ENCODE measurements at regions of chr20 and their contacts with region 1.

Region 1: GRCh38 chr20:21505161-21505809 is 8.6 kb downstream of the NKX2-2 start:
- DNase-seq: peak in 1 of 2 donors; percentile 52
- H3K4me3 ChIP-seq: peak overlapping the region in 1 of 2 donors; percentile 41
- H3K27ac ChIP-seq: no peak overlapping the region
- H3K4me1 ChIP-seq: peaks cover 0 to 33% (median 25%) of the 10 kb centered on the region in 4 donors
- H3K27me3 ChIP-seq: peaks cover 9 to 91% of the 10 kb centered on the region in 2 donors
- CTCF ChIP-seq: peak; percentile 85 to 89

Region 2: DNA sequence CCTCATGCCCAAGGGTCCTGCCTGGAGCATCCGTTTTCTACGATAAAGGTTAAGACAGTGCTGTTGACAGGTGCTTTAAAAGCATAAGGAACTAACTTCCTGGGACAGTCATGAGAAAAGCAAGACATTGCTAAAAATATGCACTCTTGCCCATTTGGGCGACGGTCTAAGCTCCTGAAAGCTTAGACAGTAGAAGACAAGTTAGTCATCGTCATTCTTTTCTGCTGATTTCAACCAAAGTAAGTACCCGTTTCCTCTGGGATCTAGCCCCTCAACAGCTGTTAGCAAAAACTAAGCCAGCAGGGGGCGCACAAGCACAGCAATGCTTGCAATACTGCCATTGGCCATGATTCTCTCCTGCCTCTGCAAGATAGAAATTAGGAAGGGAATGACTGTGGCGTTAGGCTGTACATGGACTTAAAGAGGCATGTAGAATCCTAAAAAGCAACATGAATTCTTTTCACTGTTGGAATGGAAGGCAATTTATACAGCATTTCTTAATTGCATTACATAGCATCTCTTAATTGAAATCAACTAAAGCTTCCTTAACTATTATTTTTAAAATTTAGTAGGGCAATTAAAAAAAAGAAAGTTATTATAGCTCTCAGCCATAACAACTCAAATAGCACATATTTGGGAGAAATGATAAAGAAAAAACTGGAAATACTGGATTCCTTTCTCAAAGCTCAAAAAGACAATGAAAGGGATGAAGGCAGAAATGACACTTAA is 645.0 kb before region 1 on chr20:
- intact Hi-C with region 1: loop called (anchors 2 kb)
- DNase-seq: peak; percentile 82 to 83
- H3K4me3 ChIP-seq: no peak overlapping the region
- H3K27ac ChIP-seq: no peak overlapping the region
- H3K4me1 ChIP-seq: no peaks in the 10 kb centered on the region
- H3K27me3 ChIP-seq: peaks cover 0 to 7% of the 10 kb centered on the region in 2 donors
- CTCF ChIP-seq: peak; percentile 79 to 81

Region 3: GRCh38 chr20:21235484-21236445 is 269.5 kb before region 1 on chr20:
- intact Hi-C with region 1: loop called (anchors 5 kb)
- DNase-seq: peak in 1 of 2 donors; percentile 33
- H3K4me3 ChIP-seq: no peak overlapping the region
- H3K27ac ChIP-seq: no peak overlapping the region
- H3K4me1 ChIP-seq: peaks cover 0 to 7% (median 0%) of the 10 kb centered on the region in 4 donors
- H3K27me3 ChIP-seq: no peaks in the 10 kb centered on the region
- CTCF ChIP-seq: peak; percentile 64 to 68

Region 4: GRCh38 chr20:21622097-21622857 is 117.0 kb after region 1 on chr20:
- intact Hi-C with region 1: no loop called
- DNase-seq: no peak
- H3K4me3 ChIP-seq: no peak overlapping the region
- H3K27ac ChIP-seq: no peak overlapping the region
- H3K4me1 ChIP-seq: no peaks in the 10 kb centered on the region
- H3K27me3 ChIP-seq: no peaks in the 10 kb centered on the region
- CTCF ChIP-seq: no peak

Region 5: DNA sequence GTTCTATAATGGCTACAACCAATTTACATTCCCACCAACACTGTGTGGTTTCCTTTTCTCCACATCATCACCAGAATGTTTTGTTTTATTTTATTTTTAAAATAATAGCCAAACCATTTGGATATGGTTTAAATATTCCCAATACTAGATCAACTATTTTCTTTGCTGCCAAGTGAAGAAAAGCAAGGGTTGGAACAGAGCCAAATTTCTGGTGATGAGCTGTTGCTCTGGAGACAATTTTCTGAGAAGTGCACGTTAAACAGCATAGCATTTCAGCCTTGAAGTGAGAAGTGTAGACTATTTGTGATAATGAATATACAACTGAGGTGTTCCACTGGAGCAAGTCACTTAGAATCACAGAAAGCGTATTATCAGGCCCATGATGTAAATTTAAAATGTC is 389.3 kb after region 1 on chr20:
- intact Hi-C with region 1: no loop called
- DNase-seq: no peak
- H3K4me3 ChIP-seq: no peak overlapping the region
- H3K27ac ChIP-seq: no peak overlapping the region
- H3K4me1 ChIP-seq: no peaks in the 10 kb centered on the region
- H3K27me3 ChIP-seq: no peaks in the 10 kb centered on the region
- CTCF ChIP-seq: no peak

Measured in tibial artery (tissue), 4 donors.